ENCODE measurements at regions of chr6 and their contacts with region 1.

Region 1: GRCh38 chr6:31665501-31666336 is at the start of gene CSNK2B:
- DNase-seq: peak; percentile 98 to 100 (median 99)
- ATAC-seq: peak; percentile 85
- H3K4me3 ChIP-seq: peak within 1 kb of the TSS; percentile 66
- H3K27ac ChIP-seq: peak within 1 kb of the TSS; percentile 97
- H3K4me1 ChIP-seq: peaks cover 36 to 39% of the 10 kb centered on the region in 2 experiments; a peak in 4 of 5 replicates
- H3K27me3 ChIP-seq: no peaks in the 10 kb centered on the region
- CTCF ChIP-seq: peak; percentile 18 to 42 (median 33); a peak in 4 of 6 replicates
- EP300 ChIP-seq: peak; percentile 47
- POLR2A ChIP-seq: peak; percentile 99
- RAD21 ChIP-seq: no peak
- polyA plus RNA-seq, gene CSNK2B: 870 to 972 TPM

Region 2: GRCh38 chr6:31619805-31620585 is 45.7 kb before region 1 on chr6:
- CTCF ChIA-PET with region 1: no interaction called
- POLR2A ChIA-PET with region 1: interaction called, 20 read pairs
- in situ Hi-C with region 1: no loop called
- intact Hi-C with region 1: loop called (anchors 1 kb)
- DNase-seq: peak; percentile 93 to 100 (median 97)
- ATAC-seq: peak; percentile 92
- H3K4me3 ChIP-seq: peak overlapping the region; percentile 96
- H3K27ac ChIP-seq: peak overlapping the region; percentile 98
- H3K4me1 ChIP-seq: peaks cover 28 to 37% of the 10 kb centered on the region in 2 experiments
- H3K27me3 ChIP-seq: no peaks in the 10 kb centered on the region
- CTCF ChIP-seq: no peak; a peak in 1 of 6 replicates
- EP300 ChIP-seq: peak; percentile 71
- POLR2A ChIP-seq: peak; percentile 99
- RAD21 ChIP-seq: peak in 1 of 2 experiments; percentile 18; a peak in 1 of 4 replicates

Region 3: GRCh38 chr6:31680840-31681671 is 15.3 kb after region 1 on chr6 and contains the start of gene LY6G5C:
- CTCF ChIA-PET with region 1: interaction called, 5 read pairs
- POLR2A ChIA-PET with region 1: interaction called, 33 read pairs
- in situ Hi-C with region 1: no loop called
- intact Hi-C with region 1: no loop called
- DNase-seq: peak; percentile 82 to 94 (median 88)
- ATAC-seq: peak; percentile 88
- H3K4me3 ChIP-seq: no peak within 1 kb of the TSS
- H3K27ac ChIP-seq: no peak within 1 kb of the TSS
- H3K4me1 ChIP-seq: peaks cover 10 to 24% of the 10 kb centered on the region in 2 experiments
- H3K27me3 ChIP-seq: no peaks in the 10 kb centered on the region
- CTCF ChIP-seq: peak; percentile 96 to 99 (median 99)
- EP300 ChIP-seq: peak; percentile 39; the same call in 1 of the 2 replicates
- POLR2A ChIP-seq: no peak
- RAD21 ChIP-seq: peak; percentile 99 to 100
- polyA plus RNA-seq, gene LY6G5C: 0.10 TPM in 1 of 2 experiments, not detected in the other

Region 4: GRCh38 chr6:31739639-31740396 is 74.1 kb after region 1 on chr6 and contains the start of gene MSH5:
- CTCF ChIA-PET with region 1: no interaction called
- POLR2A ChIA-PET with region 1: interaction called, 182 read pairs
- in situ Hi-C with region 1: no loop called
- intact Hi-C with region 1: loop called (anchors 1 kb)
- DNase-seq: peak; percentile 100
- ATAC-seq: peak; percentile 84
- H3K4me3 ChIP-seq: peak within 1 kb of the TSS; percentile 64
- H3K27ac ChIP-seq: peak within 1 kb of the TSS; percentile 95
- H3K4me1 ChIP-seq: peaks cover 56 to 61% of the 10 kb centered on the region in 2 experiments
- H3K27me3 ChIP-seq: no peaks in the 10 kb centered on the region
- CTCF ChIP-seq: peak in 1 of 3 experiments; percentile 13; a peak in 1 of 6 replicates
- EP300 ChIP-seq: peak; percentile 71
- POLR2A ChIP-seq: peak; percentile 96
- RAD21 ChIP-seq: peak in 1 of 2 experiments; percentile 28; a peak in 3 of 4 replicates
- polyA plus RNA-seq, gene MSH5: 12.5 to 14.0 TPM

Region 5: DNA sequence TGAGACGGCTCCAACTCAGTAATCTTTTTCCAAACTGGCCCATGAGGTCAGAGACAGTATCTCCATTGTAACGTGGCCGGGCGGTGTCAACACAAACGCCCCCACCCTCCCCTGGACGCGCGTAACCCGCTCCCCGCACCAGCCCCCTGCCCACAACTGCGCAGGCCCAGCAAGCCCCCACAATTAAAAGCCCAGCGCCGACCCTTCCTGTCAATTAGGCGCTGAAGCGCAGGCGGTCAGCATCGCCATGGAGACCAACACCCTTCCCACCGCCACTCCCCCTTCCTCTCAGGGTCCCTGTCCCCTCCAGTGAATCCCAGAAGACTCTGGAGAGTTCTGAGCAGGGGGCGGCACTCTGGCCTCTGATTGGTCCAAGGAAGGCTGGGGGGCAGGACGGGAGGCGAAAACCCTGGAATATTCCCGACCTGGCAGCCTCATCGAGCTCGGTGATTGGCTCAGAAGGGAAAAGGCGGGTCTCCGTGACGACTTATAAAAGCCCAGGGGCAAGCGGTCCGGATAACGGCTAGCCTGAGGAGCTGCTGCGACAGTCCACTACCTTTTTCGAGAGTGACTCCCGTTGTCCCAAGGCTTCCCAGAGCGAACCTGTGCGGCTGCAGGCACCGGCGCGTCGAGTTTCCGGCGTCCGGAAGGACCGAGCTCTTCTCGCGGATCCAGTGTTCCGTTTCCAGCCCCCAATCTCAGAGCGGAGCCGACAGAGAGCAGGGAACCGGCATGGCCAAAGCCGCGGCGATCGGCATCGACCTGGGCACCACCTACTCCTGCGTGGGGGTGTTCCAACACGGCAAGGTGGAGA is 149.5 kb after region 1 on chr6 and contains the starts of genes HSPA1A and HSPA1L:
- CTCF ChIA-PET with region 1: no interaction called
- POLR2A ChIA-PET with region 1: interaction called, 13 read pairs
- in situ Hi-C with region 1: no loop called
- intact Hi-C with region 1: no loop called
- DNase-seq: peak; percentile 97 to 100 (median 98)
- ATAC-seq: peak; percentile 73
- H3K4me3 ChIP-seq: peak within 1 kb of the TSS; percentile 54
- H3K27ac ChIP-seq: peak within 1 kb of the TSS; percentile 97
- H3K4me1 ChIP-seq: peaks cover 29 to 37% of the 10 kb centered on the region in 2 experiments
- H3K27me3 ChIP-seq: no peaks in the 10 kb centered on the region
- CTCF ChIP-seq: 0 out of 6 replicates have a peak, but pooled peaks of 1 of the 3 experiments have one; percentile 1
- EP300 ChIP-seq: peak; percentile 85
- POLR2A ChIP-seq: peak; percentile 100
- RAD21 ChIP-seq: peak; percentile 16 to 30; a peak in 3 of 4 replicates
- polyA plus RNA-seq, gene HSPA1A: 2.2 to 4.1 TPM
- polyA plus RNA-seq, gene HSPA1L: 0.14 to 0.34 TPM

Region 6: GRCh38 chr6:31862344-31863227 is 196.9 kb after region 1 on chr6 and contains the start of gene NEU1:
- CTCF ChIA-PET with region 1: no interaction called
- POLR2A ChIA-PET with region 1: interaction called, 30 read pairs
- in situ Hi-C with region 1: loop called (anchors 5 kb)
- intact Hi-C with region 1: no loop called
- DNase-seq: peak; percentile 100
- ATAC-seq: peak; percentile 98
- H3K4me3 ChIP-seq: peak within 1 kb of the TSS; percentile 62
- H3K27ac ChIP-seq: peak within 1 kb of the TSS; percentile 73
- H3K4me1 ChIP-seq: peaks cover 13 to 43% of the 10 kb centered on the region in 2 experiments; a peak in 4 of 5 replicates
- H3K27me3 ChIP-seq: no peaks in the 10 kb centered on the region
- CTCF ChIP-seq: peak in 1 of 3 experiments; percentile 3; a peak in 1 of 6 replicates
- EP300 ChIP-seq: peak; percentile 38
- POLR2A ChIP-seq: peak; percentile 98
- RAD21 ChIP-seq: peak; percentile 19 to 32; a peak in 1 of 4 replicates
- polyA plus RNA-seq, gene NEU1: 14.8 to 20.6 TPM